ENCODE measurements at regions of chr2 and their contacts with region 1.

Region 1: GRCh38 chr2:102166189-102166845 is 20.5 kb upstream of the IL1RL2 start:
- DNase-seq: no peak
- ATAC-seq: peak; percentile 47
- H3K4me3 Mint-ChIP-seq: no peak overlapping the region
- H3K27ac Mint-ChIP-seq: no peak overlapping the region
- H3K4me1 Mint-ChIP-seq: peaks cover 9% of the 10 kb centered on the region
- H3K27me3 Mint-ChIP-seq: no peaks in the 10 kb centered on the region

Region 2: DNA sequence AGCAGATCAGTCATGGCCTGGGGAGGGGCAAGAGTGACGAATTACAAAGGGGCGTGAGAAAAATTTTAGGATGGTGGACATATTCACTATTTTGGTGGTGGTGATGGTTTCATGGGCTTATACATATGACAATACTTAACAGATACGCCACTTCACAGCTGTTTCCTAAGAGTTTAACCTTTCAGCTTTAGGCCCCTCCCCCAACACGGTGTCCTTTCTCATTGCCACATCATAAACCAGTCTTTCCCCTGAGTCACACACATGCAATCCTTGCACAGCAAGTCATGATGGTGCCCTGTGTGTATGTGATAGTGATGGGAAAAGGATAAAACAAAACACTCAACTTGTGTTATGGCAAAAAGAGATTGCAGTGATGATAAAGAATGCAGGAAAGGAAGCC is 71.4 kb before region 1 on chr2:
- CTCF ChIA-PET with region 1: no interaction called
- POLR2A ChIA-PET with region 1: no interaction called
- intact Hi-C with region 1: no loop called
- DNase-seq: peak; percentile 76
- ATAC-seq: peak; percentile 98
- H3K4me3 Mint-ChIP-seq: no peak overlapping the region
- H3K27ac Mint-ChIP-seq: no peak overlapping the region
- H3K4me1 Mint-ChIP-seq: peaks cover 21% of the 10 kb centered on the region
- H3K27me3 Mint-ChIP-seq: peaks cover 3% of the 10 kb centered on the region

Region 3: DNA sequence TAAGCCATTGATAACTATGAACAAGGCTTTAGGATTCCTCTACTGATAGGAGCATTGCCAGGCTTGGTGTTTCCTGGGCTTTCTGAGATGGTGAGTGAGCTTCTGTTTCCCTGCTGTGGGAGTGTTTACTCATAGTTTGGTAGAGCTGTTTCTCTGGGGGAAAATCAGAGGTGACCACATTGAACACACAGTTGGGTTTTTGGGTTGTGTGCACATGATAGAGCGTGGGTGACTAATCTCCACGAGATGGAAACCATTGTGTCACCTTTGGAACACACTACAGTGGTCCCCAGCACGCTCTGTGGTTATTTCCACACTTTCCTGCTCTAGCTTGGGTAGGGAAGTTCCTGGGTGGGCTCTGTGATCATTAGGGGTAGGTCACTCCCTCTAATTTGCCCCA is 18.4 kb before region 1 on chr2:
- CTCF ChIA-PET with region 1: interaction called, 5 read pairs
- POLR2A ChIA-PET with region 1: no interaction called
- intact Hi-C with region 1: loop called in 1 of 2 experiments (anchors 2 kb)
- DNase-seq: peak; percentile 81
- ATAC-seq: peak; percentile 87
- H3K4me3 Mint-ChIP-seq: no peak overlapping the region
- H3K27ac Mint-ChIP-seq: peak overlapping the region; percentile 89
- H3K4me1 Mint-ChIP-seq: peaks cover 26% of the 10 kb centered on the region
- H3K27me3 Mint-ChIP-seq: peaks cover 7% of the 10 kb centered on the region

Region 4: GRCh38 chr2:102336502-102336945 is 170.2 kb after region 1 on chr2:
- CTCF ChIA-PET with region 1: no interaction called
- POLR2A ChIA-PET with region 1: interaction called, 15 read pairs
- intact Hi-C with region 1: no loop called
- DNase-seq: no peak
- ATAC-seq: peak; percentile 66
- H3K4me3 Mint-ChIP-seq: no peak overlapping the region
- H3K27ac Mint-ChIP-seq: no peak overlapping the region
- H3K4me1 Mint-ChIP-seq: peaks cover 15% of the 10 kb centered on the region
- H3K27me3 Mint-ChIP-seq: peaks cover 7% of the 10 kb centered on the region

Measured in activated CD4-positive, alpha-beta T cell treated with anti-CD3 and anti-CD28 coated beads for 36 hours (primary cell).